Activated CD8-positive, alpha-beta memory T cell treated with anti-CD3 and anti-CD28 coated beads, Interleukin-2, amount 10 ng/mL, durations not matched to agents 7 days and 5 days (primary cell): ENCODE measurements at regions of chr1 and their contacts with region 1.

Region 1: DNA sequence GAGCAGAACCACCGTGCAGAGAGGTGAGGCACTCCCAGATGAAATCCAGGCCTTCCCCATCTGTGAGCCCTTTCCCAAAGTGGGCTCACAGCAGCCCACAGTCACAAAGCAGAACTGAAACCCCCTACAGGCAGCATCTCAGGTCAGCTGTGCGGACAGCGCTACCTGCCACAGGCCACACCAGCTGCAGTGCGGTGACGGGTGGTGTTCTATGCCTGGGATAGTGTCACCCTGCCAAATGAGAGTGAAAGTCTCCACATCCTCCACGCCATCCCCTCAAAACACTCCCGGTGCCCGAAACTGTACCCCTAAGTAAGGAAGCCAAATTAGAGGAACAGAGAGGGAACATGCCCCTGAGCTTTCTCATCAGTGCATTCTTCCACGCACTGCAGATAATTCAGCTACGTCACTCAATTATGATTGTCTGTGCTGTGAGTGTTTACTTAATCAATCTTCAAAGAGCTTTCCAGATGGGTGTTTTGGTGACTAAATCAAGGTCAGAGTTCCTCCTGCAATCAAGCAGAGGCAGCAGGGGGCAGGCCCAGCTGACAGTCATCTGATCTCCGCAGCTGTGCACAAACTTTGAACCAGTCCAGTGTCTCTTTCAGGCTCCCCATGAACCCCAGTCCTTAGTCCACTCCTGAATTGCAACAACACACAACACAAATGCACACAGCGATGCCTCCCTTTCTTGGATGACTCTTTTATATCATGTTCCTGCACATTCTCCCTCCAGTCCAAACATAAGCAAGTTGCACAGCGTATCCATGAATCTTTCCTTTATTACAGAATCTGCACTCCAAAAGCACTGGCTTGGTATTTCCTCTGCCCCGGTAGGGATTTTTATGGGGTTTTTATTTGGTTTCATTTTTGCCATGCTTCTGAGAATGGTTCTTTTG is 150.0 kb downstream of the TOMM20 start:
- DNase-seq: peak; percentile 78
- ATAC-seq: peak; percentile 45
- H3K4me3 Mint-ChIP-seq: peak overlapping the region; percentile 51
- H3K27ac Mint-ChIP-seq: peak overlapping the region; percentile 88
- H3K4me1 Mint-ChIP-seq: peaks cover 73% of the 10 kb centered on the region
- H3K27me3 Mint-ChIP-seq: no peaks in the 10 kb centered on the region

Region 2: DNA sequence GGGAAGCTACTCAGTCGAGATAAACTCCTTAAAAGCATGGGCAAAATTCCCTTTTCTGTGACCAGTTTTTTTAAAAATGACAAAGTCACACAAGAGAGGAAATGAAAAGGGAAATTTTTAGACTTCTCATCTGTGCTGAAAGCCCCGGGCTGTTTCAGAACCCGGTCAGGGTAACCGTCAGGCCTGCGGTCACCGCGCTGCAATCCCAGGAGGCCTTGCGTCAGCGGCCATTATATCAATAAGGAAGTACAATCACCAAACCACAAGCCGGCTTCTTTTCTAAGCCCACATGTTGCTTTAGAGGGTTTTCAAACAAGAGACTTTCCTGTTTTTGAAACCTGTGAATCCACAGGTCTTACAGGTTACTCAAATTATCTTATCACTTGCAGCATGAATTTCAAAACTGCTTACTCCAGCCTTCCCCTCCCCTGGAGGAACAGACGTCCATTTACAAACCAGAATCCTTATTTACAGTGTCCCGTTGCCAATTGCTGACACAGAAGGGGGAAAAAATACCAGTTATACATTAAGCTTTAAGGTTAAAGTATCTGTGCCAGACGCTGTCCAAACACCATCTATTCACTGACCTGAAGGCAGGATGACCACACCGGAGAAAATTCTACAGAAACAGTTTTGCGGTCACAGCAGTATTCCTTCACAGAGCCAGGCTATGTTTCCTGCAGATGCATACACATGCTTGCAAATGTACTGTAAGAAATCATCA is 15.3 kb before region 1 on chr1:
- CTCF ChIA-PET with region 1: interaction called, 13 read pairs
- DNase-seq: peak; percentile 96
- ATAC-seq: peak; percentile 81
- H3K4me3 Mint-ChIP-seq: peak overlapping the region; percentile 64
- H3K27ac Mint-ChIP-seq: peak overlapping the region; percentile 89
- H3K4me1 Mint-ChIP-seq: peaks cover 62% of the 10 kb centered on the region
- H3K27me3 Mint-ChIP-seq: no peaks in the 10 kb centered on the region

Region 3: DNA sequence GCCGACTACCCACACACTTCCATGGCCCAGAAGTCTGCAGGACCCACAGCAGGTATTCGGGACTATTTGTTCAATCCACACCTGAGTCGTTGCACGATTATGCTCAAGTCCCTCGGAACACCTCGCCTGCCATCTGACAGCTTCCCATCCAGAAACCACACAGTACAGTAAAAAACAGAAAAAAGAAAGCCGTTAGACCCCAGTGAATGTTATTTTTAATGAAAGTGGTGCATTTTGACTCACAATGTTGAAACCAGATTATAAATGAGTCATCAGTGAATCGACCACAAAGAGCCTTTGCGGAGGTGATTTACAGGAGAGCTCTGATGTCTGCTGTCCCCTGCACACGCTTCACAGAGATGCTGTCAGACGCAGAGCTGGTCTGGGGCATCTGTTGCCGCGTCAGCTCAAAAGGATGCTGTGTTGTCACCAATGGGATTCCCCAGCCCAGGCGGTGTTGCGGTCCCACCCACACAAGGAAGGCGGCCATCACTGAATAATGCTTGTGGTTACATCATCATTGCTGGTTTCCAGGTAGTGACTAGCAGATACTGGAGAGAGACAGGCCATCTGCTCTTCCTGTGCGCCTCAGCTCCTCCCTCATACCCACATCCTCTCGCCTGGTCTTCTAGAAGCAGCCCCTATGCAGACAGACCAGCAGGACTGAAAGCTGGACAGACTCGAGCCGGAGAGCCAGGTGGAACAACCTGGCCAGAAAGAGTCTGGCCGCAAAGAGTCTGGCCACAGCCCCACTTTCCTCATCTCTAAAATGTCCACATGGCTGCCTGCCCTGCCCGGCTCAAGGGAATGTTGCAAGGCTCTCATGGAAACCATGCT is 33.2 kb after region 1 on chr1:
- CTCF ChIA-PET with region 1: interaction called, 11 read pairs
- DNase-seq: peak; percentile 99
- ATAC-seq: peak; percentile 94
- H3K4me3 Mint-ChIP-seq: peak overlapping the region; percentile 46
- H3K27ac Mint-ChIP-seq: peak overlapping the region; percentile 93
- H3K4me1 Mint-ChIP-seq: peaks cover 80% of the 10 kb centered on the region
- H3K27me3 Mint-ChIP-seq: peaks cover 5% of the 10 kb centered on the region

Region 4: GRCh38 chr1:235045034-235045720 is 66.5 kb after region 1 on chr1:
- CTCF ChIA-PET with region 1: no interaction called
- DNase-seq: no peak
- ATAC-seq: no peak
- H3K4me3 Mint-ChIP-seq: no peak overlapping the region
- H3K27ac Mint-ChIP-seq: no peak overlapping the region
- H3K4me1 Mint-ChIP-seq: peaks cover 51% of the 10 kb centered on the region
- H3K27me3 Mint-ChIP-seq: no peaks in the 10 kb centered on the region